Heart left ventricle (tissue), 16 donors: ENCODE measurements at regions of chr9 and their contacts with region 1.

Region 1: GRCh38 chr9:133485361-133486260 is 6.7 kb upstream of the SLC2A6 start:
- DNase-seq: peak in 3 of 5 donors; percentile 21 to 69 (median 22)
- ATAC-seq: peak in 2 of 4 donors; percentile 4 to 11
- H3K4me3 ChIP-seq: no peak overlapping the region
- H3K27ac ChIP-seq: no peak overlapping the region
- H3K4me1 ChIP-seq: peaks cover 0 to 12% (median 2%) of the 10 kb centered on the region in 12 donors
- H3K27me3 ChIP-seq: peaks cover 0 to 4% (median 0%) of the 10 kb centered on the region in 9 donors
- CTCF ChIP-seq: no peak
- POLR2A ChIP-seq: no peak

Region 2: GRCh38 chr9:133023117-133023890 is 462.3 kb before region 1 on chr9:
- intact Hi-C with region 1: loop called in 1 of 10 experiments (anchors 5 kb)
- DNase-seq: no peak
- ATAC-seq: peak in 2 of 4 donors; percentile 13 to 23
- H3K4me3 ChIP-seq: no peak overlapping the region
- H3K27ac ChIP-seq: no peak overlapping the region
- H3K4me1 ChIP-seq: peaks cover 0 to 6% (median under 1%) of the 10 kb centered on the region in 12 donors
- H3K27me3 ChIP-seq: no peaks in the 10 kb centered on the region
- CTCF ChIP-seq: no peak
- POLR2A ChIP-seq: no peak

Region 3: DNA sequence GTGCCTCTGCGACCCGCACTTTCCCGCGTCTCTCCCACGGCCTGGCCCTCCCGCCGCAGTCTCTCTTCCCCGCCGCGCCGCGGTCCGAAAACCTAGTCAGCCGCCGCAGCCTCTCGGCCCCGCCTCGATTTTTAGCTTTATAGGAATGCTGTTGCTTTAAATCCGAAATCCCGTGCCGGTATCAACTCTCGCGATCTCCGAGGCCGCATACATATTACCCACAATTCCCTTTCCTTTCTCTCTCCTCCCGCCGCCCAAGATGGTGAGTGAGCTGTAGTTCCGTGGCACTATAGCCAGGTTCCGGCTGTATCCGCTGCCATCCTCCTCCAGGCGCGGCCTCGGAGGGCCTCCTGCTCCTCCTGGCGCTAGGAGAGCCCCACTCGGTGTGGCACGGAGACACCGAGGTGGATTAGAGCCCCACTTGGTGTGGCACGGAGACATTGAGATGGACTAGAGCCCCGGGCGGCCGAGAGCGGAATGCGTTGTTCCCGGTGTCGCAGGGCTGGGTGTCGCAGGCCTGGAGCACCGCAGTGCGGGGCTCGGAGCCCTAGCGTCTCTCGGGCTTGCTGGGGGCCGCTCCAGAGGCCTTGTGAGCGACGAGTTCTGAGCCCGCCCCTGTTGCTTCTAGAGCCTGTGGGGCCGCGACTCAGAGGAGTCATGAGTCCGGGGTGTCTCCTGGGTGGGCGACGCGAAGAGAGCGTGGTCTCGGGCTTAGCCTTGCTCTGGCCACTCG is 137.5 kb before region 1 on chr9 and contains the starts of genes MED22 and RPL7A:
- intact Hi-C with region 1: loop called in 1 of 10 experiments (anchors 10 kb)
- DNase-seq: peak; percentile 94 to 95 (median 95)
- ATAC-seq: peak; percentile 81 to 93 (median 90)
- H3K4me3 ChIP-seq: peak within 1 kb of the TSS; percentile 78 to 100 (median 94)
- H3K27ac ChIP-seq: peak within 1 kb of the TSS; percentile 69 to 99 (median 89)
- H3K4me1 ChIP-seq: peaks cover 4 to 31% (median 25%) of the 10 kb centered on the region in 12 donors
- H3K27me3 ChIP-seq: no peaks in the 10 kb centered on the region
- CTCF ChIP-seq: peak in 1 of 12 donors; percentile 3
- POLR2A ChIP-seq: peak in 1 of 2 donors; percentile 91
- total RNA-seq, gene MED22: 15.5 to 33.8 (median 19.5) TPM
- total RNA-seq, gene RPL7A: 845 to 1,270 (median 964) TPM

Region 4: DNA sequence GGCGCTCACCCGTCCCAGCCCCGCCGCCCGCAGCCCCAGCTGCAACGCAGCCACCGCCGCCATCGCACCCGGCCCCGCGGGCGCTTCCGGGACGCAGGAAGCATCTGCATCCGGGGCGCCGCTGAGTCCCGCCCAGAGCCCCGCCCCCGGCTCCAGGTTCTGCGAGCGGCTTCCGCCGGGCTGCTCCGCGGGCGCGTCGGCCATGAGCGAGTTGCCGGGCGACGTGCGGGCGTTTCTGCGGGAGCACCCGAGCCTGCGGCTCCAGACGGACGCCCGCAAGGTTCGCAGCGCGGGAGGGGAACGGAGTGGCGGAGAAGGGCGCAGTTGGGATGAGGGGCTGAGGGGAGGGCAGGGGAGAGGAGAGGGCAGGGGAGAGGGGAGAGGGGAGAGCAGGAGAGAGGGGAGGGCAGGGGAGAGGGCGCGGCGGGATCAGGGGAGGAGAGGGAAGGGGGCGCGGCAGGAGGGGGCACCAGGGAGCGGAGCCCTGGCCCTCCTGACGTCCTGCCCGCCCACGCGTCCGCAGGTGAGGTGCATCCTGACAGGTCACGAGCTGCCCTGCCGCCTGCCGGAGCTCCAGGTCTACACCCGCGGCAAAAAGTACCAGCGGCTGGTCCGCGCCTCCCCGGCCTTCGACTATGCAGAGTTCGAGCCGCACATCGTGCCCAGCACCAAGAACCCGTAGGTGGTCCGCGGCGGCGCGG is 129.1 kb before region 1 on chr9 and contains the starts of genes SURF1 and SURF2:
- intact Hi-C with region 1: loop called in 1 of 10 experiments (anchors 5 kb)
- DNase-seq: peak; percentile 88 to 94 (median 91)
- ATAC-seq: peak; percentile 63 to 94 (median 90)
- H3K4me3 ChIP-seq: peak within 1 kb of the TSS; percentile 58 to 97 (median 86)
- H3K27ac ChIP-seq: peak within 1 kb of the TSS in 11 of 12 donors; percentile 65 to 89 (median 78)
- H3K4me1 ChIP-seq: peaks cover 3 to 50% (median 26%) of the 10 kb centered on the region in 12 donors
- H3K27me3 ChIP-seq: no peaks in the 10 kb centered on the region
- CTCF ChIP-seq: no peak
- POLR2A ChIP-seq: peak; percentile 13 to 87
- total RNA-seq, gene SURF1: 36.8 to 58.1 (median 50.9) TPM
- total RNA-seq, gene SURF2: 10.0 to 24.8 (median 13.6) TPM

Region 5: GRCh38 chr9:133406480-133407307 is 78.9 kb before region 1 on chr9:
- intact Hi-C with region 1: loop called (anchors 1 to 5 kb)
- DNase-seq: peak; percentile 68 to 86 (median 77)
- ATAC-seq: peak; percentile 81 to 86 (median 82)
- H3K4me3 ChIP-seq: no peak overlapping the region
- H3K27ac ChIP-seq: no peak overlapping the region
- H3K4me1 ChIP-seq: peaks cover 0 to 17% (median 0%) of the 10 kb centered on the region in 12 donors
- H3K27me3 ChIP-seq: no peaks in the 10 kb centered on the region
- CTCF ChIP-seq: peak; percentile 83 to 94 (median 89)
- POLR2A ChIP-seq: no peak

Region 6: DNA sequence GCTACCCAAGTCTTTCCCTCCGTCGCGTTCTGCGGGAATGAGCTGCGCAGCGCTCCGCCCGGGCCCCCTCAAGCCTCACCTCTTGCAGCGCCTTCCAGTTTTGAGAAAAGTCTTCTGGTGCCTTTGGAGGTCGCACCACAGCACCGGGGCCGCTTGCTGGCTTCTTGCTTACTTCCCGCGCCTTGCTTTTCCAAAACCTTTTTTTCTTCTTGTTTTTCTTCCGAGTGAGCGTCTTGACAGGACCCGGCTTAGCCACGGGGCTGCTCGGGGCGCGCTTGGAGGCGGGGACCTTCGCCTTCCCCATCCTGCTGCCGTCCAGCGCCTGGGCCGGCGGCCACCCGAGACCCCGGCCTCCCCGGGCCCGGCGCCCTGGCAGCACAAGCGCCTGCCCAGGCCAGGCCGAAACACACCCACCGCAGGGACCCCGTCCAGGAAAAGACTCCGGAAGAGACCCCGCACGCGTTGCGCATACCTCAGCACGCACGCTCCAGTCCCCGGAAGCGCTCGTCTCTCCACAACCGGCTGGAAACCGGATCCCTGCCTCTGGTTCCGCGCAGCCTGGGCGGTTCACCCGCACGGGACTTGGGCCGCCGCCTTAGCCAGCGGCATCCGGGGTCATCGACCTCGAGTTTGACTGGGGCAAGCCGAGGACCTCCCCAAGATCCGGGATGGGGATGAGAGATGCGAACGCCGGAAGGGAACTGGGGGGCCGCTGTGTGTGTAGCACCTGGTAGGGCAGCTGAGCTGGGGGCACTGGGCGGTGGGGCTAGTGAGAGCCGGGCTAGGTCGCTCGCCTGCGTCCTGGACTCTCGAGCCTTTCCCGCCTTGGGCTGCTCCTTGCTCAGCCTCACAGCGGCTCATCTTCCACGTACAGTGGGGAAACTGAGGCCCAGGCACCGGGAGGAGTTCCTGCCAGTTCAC is 67.8 kb before region 1 on chr9 and contains the start of gene REXO4:
- intact Hi-C with region 1: loop called in 1 of 10 experiments (anchors 5 kb)
- DNase-seq: peak; percentile 83 to 90 (median 86)
- ATAC-seq: peak; percentile 88 to 98 (median 96)
- H3K4me3 ChIP-seq: peak within 1 kb of the TSS; percentile 68 to 97 (median 84)
- H3K27ac ChIP-seq: peak within 1 kb of the TSS; percentile 29 to 92 (median 84)
- H3K4me1 ChIP-seq: peaks cover 6 to 31% (median 19%) of the 10 kb centered on the region in 12 donors
- H3K27me3 ChIP-seq: no peaks in the 10 kb centered on the region
- CTCF ChIP-seq: peak in 1 of 12 donors; percentile 10
- POLR2A ChIP-seq: peak in 1 of 2 donors; percentile 52
- total RNA-seq, gene REXO4: 9.6 to 21.5 (median 13.7) TPM

Region 7: GRCh38 chr9:133539991-133540697 is 54.5 kb after region 1 on chr9:
- intact Hi-C with region 1: no loop called
- DNase-seq: no peak
- ATAC-seq: peak; percentile 8 to 40 (median 30)
- H3K4me3 ChIP-seq: peak overlapping the region in 9 of 12 donors; percentile 9 to 43 (median 37)
- H3K27ac ChIP-seq: peak overlapping the region; percentile 6 to 80 (median 64)
- H3K4me1 ChIP-seq: peaks cover 0 to 64% (median 33%) of the 10 kb centered on the region in 12 donors
- H3K27me3 ChIP-seq: no peaks in the 10 kb centered on the region
- CTCF ChIP-seq: no peak
- POLR2A ChIP-seq: no peak